MCF 10A (cell line): ENCODE measurements at regions of chr20 and their contacts with region 1.

Region 1: DNA sequence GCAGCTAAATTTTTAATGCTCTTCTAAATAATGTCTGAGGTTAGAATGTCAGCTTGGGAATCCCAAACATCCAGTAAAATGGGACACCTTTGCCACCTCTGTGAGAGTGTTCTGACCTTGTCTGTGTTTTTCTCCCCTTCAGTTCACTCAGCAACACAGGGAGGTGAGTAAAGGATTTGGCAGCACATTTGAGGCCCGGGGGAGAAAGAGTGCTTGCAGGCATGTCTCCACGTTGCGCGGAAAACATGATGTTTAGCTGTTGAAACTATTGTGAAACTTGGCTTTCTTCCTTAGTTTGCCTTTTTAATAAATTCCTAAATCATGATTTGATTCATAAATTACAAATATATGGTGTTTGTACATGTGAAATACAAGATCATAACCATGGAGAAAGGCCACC is 707.8 kb upstream of the FLRT3 start:
- DNase-seq: peak; percentile 89
- H3K4me3 Mint-ChIP-seq: peak overlapping the region; percentile 49
- H3K27ac Mint-ChIP-seq: peak overlapping the region; percentile 92
- H3K4me1 Mint-ChIP-seq: peaks cover 37% of the 10 kb centered on the region
- H3K27me3 Mint-ChIP-seq: no peaks in the 10 kb centered on the region
- CTCF ChIP-seq: no peak

Region 2: GRCh38 chr20:14687313-14687712 is 357.9 kb before region 1 on chr20:
- CTCF ChIA-PET with region 1: no interaction called
- POLR2A ChIA-PET with region 1: no interaction called
- intact Hi-C with region 1: no loop called
- DNase-seq: peak; percentile 44
- H3K4me3 Mint-ChIP-seq: no peak overlapping the region
- H3K27ac Mint-ChIP-seq: no peak overlapping the region
- H3K4me1 Mint-ChIP-seq: no peaks in the 10 kb centered on the region
- H3K27me3 Mint-ChIP-seq: no peaks in the 10 kb centered on the region
- CTCF ChIP-seq: no peak

Region 3: DNA sequence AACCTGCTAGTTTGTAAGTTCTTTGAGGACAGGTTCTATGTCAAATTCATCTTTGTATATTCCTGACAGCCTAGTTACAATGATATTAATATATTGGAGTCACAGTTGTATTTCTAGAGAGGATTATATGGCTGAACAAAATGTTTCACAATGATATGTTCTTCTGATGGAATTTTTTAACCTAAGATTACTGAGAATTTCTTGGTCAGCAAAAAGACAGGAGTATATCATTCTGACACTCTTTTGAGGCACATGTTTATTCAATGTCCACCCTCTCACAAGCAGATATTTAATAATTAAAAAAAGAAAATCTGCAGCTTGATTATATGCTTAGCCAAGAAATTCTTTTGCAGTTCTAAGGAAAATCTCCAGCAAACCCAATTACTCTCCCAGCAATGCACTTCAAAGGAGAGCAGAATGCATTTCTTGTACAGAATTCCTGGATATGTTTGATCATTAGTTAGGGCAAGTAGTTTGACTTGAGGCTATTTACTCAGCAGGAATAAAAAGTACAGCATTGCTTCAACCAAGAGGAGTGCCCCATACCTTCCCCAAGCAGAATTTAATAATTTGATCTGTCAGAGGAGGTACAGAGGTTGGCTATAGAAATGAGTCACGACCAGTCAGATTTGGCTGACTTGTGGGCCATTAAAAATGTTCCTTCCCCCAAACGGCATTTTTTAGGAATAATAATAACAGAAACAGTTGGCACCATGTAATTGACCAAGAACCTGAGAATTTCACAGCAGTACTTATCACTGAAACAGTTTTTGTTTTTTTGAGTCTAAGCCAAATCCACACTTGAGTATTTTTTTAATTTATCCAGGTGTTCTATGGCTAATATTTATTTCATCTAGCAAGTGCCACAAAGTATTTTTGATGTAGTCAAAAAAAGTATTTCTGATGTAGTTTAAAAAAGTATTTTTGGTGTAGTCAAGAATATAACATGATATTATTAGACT is 199.8 kb before region 1 on chr20:
- CTCF ChIA-PET with region 1: interaction called, 3 read pairs
- POLR2A ChIA-PET with region 1: interaction called, 13 read pairs
- intact Hi-C with region 1: no loop called
- DNase-seq: peak; percentile 76
- H3K4me3 Mint-ChIP-seq: peak overlapping the region; percentile 1
- H3K27ac Mint-ChIP-seq: peak overlapping the region; percentile 82
- H3K4me1 Mint-ChIP-seq: peaks cover 13% of the 10 kb centered on the region
- H3K27me3 Mint-ChIP-seq: no peaks in the 10 kb centered on the region
- CTCF ChIP-seq: no peak

Region 4: DNA sequence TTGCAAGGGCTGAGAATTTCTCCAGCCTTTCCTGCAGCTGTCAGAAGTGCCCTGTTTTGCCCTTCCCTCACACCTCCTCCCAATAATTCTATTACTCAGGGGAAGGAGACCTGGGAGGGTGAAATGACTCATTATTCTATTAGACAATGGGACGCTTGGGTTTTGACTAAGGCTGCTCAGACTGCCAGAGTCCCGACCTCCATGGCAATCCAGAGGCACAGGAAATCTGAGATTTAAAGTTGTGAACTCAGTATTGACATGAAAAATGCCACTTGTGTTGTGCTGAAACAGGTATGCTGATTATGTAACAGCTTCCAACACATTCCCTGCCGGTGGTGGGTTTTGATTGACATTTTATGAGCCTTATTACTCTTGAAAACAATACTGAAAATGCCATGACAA is 82.0 kb before region 1 on chr20:
- CTCF ChIA-PET with region 1: interaction called, 4 read pairs
- POLR2A ChIA-PET with region 1: interaction called, 16 read pairs
- intact Hi-C with region 1: no loop called
- DNase-seq: peak; percentile 87
- H3K4me3 Mint-ChIP-seq: no peak overlapping the region
- H3K27ac Mint-ChIP-seq: peak overlapping the region; percentile 57
- H3K4me1 Mint-ChIP-seq: peaks cover 35% of the 10 kb centered on the region
- H3K27me3 Mint-ChIP-seq: no peaks in the 10 kb centered on the region
- CTCF ChIP-seq: no peak

Region 5: GRCh38 chr20:14997635-14998185 is 47.5 kb before region 1 on chr20:
- CTCF ChIA-PET with region 1: interaction called, 4 read pairs
- POLR2A ChIA-PET with region 1: interaction called, 20 read pairs
- intact Hi-C with region 1: no loop called
- DNase-seq: peak; percentile 90
- H3K4me3 Mint-ChIP-seq: no peak overlapping the region
- H3K27ac Mint-ChIP-seq: peak overlapping the region; percentile 54
- H3K4me1 Mint-ChIP-seq: peaks cover 21% of the 10 kb centered on the region
- H3K27me3 Mint-ChIP-seq: no peaks in the 10 kb centered on the region
- CTCF ChIP-seq: no peak

Region 6: GRCh38 chr20:15227102-15227501 is 181.9 kb after region 1 on chr20:
- CTCF ChIA-PET with region 1: no interaction called
- POLR2A ChIA-PET with region 1: no interaction called
- intact Hi-C with region 1: no loop called
- DNase-seq: no peak
- H3K4me3 Mint-ChIP-seq: no peak overlapping the region
- H3K27ac Mint-ChIP-seq: no peak overlapping the region
- H3K4me1 Mint-ChIP-seq: no peaks in the 10 kb centered on the region
- H3K27me3 Mint-ChIP-seq: no peaks in the 10 kb centered on the region
- CTCF ChIP-seq: no peak